K562 (cell line): ENCODE measurements at regions of chr5 and their contacts with region 1.

Region 1: GRCh38 chr5:132007399-132008165 is 3.9 kb downstream of the ACSL6 start:
- DNase-seq: peak; percentile 70 to 89 (median 74)
- ATAC-seq: peak; percentile 89
- H3K4me3 ChIP-seq: no peak overlapping the region
- H3K27ac ChIP-seq: no peak overlapping the region
- H3K4me1 ChIP-seq: peaks cover 8 to 18% of the 10 kb centered on the region in 2 experiments; a peak in 4 of 5 replicates
- H3K27me3 ChIP-seq: peaks cover 0 to 7% of the 10 kb centered on the region in 2 experiments; a peak in 2 of 5 replicates
- CTCF ChIP-seq: peak; percentile 83 to 97 (median 96)
- EP300 ChIP-seq: no peak
- POLR2A ChIP-seq: no peak
- RAD21 ChIP-seq: peak; percentile 94 to 99

Region 2: DNA sequence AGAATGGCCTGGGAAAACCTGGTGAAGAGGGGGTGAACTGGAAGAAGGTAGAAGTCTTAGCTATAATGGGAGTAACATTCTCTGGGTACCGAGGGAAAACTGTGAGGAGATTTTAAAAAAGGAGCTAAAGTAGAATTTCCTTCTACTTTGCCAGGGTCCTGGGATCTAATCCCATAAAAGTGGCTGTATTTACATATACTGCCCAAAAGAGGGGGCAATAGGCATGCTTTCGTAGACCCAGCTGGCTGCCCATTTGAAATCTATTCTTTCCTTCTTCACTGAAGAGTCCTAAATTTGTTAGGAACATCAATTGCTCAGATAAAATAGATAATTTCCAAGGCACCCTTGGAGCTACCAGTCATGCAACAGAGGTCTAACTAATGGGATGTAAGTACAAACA is 584.5 kb before region 1 on chr5:
- CTCF ChIA-PET with region 1: interaction called, 4 read pairs
- POLR2A ChIA-PET with region 1: no interaction called
- in situ Hi-C with region 1: loop called (anchors 25 kb)
- intact Hi-C with region 1: loop called (anchors 5 kb)
- DNase-seq: peak in 2 of 4 experiments; percentile 20 to 38
- ATAC-seq: peak; percentile 82
- H3K4me3 ChIP-seq: no peak overlapping the region
- H3K27ac ChIP-seq: no peak overlapping the region
- H3K4me1 ChIP-seq: no peaks in the 10 kb centered on the region
- H3K27me3 ChIP-seq: no peaks in the 10 kb centered on the region
- CTCF ChIP-seq: peak; percentile 44 to 67 (median 64); a peak in 5 of 6 replicates
- EP300 ChIP-seq: no peak
- POLR2A ChIP-seq: no peak
- RAD21 ChIP-seq: peak; percentile 8 to 71; a peak in 2 of 4 replicates

Region 3: GRCh38 chr5:131589510-131590348 is 417.9 kb before region 1 on chr5:
- CTCF ChIA-PET with region 1: interaction called, 28 read pairs
- POLR2A ChIA-PET with region 1: interaction called, 4 read pairs
- in situ Hi-C with region 1: no loop called
- intact Hi-C with region 1: loop called (anchors 1 kb)
- DNase-seq: peak; percentile 29 to 65 (median 42)
- ATAC-seq: peak; percentile 93
- H3K4me3 ChIP-seq: no peak overlapping the region
- H3K27ac ChIP-seq: no peak overlapping the region
- H3K4me1 ChIP-seq: no peaks in the 10 kb centered on the region; a peak in 2 of 5 replicates
- H3K27me3 ChIP-seq: no peaks in the 10 kb centered on the region
- CTCF ChIP-seq: peak; percentile 70 to 87 (median 84)
- EP300 ChIP-seq: no peak
- POLR2A ChIP-seq: no peak
- RAD21 ChIP-seq: peak; percentile 94 to 96

Region 4: DNA sequence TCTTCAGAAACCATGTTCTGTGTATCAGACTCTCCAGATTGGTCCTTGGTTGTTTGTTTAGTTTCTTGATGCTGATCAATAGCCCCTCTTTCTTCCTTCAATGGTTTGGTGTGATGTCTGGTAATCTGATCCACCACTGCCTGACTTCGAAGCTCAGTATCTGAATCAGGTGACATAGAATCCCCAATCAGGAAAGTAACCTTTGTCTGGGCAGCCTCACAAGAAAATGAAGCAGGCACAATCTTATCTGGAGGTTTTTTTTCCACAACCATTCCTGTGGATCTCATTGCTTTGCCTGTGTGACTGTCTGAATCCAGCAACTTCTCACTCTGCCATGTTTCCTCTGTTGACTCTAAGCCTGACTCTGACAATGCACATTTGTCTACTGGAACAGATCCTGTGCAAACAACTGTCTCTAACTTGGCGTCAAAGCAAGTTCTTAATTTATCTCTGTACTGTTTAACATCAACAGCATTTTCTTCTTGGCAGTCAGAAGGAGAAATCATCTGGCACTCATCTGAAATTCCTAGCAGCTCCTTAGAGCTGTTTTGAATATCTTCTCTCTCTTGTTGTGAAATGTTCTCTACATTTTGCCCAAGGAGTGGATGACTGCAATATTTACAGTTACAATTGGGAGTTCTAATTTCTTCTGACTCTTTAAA is 335.5 kb before region 1 on chr5:
- CTCF ChIA-PET with region 1: no interaction called
- POLR2A ChIA-PET with region 1: no interaction called
- in situ Hi-C with region 1: no loop called
- intact Hi-C with region 1: loop called (anchors 10 kb)
- DNase-seq: peak in 1 of 4 experiments; percentile 10
- ATAC-seq: peak; percentile 69
- H3K4me3 ChIP-seq: no peak overlapping the region
- H3K27ac ChIP-seq: peak overlapping the region; percentile 59; the same call in 2 of the 3 replicates
- H3K4me1 ChIP-seq: peaks cover 0 to 8% of the 10 kb centered on the region in 2 experiments; a peak in 2 of 5 replicates
- H3K27me3 ChIP-seq: no peaks in the 10 kb centered on the region
- CTCF ChIP-seq: no peak
- EP300 ChIP-seq: no peak
- POLR2A ChIP-seq: no peak
- RAD21 ChIP-seq: no peak

Region 5: DNA sequence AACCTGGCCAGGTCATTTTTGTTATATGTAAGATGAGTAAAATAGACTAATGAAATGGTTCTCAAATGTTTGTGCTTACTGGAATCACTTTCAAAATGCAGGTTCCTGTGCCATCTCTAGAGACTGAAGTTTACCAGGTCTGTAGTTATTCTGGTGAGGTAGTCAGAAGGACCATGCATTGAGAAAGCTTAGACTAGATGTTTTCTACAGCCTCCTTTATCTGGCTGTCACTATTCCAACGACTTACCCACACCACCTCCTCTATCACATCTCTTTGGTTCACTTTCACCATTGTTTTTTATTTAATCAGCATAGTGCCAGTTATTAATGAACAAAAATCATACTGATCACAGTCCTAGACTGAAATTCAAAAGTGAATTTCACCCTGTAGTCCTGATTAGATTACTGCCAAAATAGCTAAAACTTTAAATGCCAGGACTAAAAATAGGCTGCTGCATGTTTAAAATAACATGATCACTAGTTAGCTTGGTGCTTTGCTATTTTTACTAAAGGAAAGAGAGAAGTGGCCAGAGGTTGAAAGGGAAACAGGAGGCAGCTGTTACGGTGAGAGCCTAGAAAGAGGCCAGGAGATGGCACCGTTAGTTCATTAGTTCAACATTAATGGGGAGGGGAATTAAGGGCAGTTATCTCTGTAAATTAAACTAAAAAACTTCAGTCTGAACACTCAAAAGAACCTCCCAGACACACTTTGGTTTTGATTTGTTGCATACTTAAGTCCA is 196.9 kb before region 1 on chr5:
- CTCF ChIA-PET with region 1: interaction called, 6 read pairs
- POLR2A ChIA-PET with region 1: no interaction called
- in situ Hi-C with region 1: loop called (anchors 5 kb)
- intact Hi-C with region 1: loop called (anchors 1 kb)
- DNase-seq: peak in 2 of 4 experiments; percentile 25 to 33
- ATAC-seq: peak; percentile 71
- H3K4me3 ChIP-seq: no peak overlapping the region
- H3K27ac ChIP-seq: no peak overlapping the region
- H3K4me1 ChIP-seq: peaks cover 2 to 18% of the 10 kb centered on the region in 2 experiments; a peak in 2 of 5 replicates
- H3K27me3 ChIP-seq: no peaks in the 10 kb centered on the region
- CTCF ChIP-seq: peak; percentile 28 to 54 (median 34); a peak in 4 of 6 replicates
- EP300 ChIP-seq: no peak
- POLR2A ChIP-seq: no peak
- RAD21 ChIP-seq: peak; percentile 72 to 85